GM12878 (cell line): ENCODE measurements at regions of chr16 and their contacts with region 1.

Region 1: DNA sequence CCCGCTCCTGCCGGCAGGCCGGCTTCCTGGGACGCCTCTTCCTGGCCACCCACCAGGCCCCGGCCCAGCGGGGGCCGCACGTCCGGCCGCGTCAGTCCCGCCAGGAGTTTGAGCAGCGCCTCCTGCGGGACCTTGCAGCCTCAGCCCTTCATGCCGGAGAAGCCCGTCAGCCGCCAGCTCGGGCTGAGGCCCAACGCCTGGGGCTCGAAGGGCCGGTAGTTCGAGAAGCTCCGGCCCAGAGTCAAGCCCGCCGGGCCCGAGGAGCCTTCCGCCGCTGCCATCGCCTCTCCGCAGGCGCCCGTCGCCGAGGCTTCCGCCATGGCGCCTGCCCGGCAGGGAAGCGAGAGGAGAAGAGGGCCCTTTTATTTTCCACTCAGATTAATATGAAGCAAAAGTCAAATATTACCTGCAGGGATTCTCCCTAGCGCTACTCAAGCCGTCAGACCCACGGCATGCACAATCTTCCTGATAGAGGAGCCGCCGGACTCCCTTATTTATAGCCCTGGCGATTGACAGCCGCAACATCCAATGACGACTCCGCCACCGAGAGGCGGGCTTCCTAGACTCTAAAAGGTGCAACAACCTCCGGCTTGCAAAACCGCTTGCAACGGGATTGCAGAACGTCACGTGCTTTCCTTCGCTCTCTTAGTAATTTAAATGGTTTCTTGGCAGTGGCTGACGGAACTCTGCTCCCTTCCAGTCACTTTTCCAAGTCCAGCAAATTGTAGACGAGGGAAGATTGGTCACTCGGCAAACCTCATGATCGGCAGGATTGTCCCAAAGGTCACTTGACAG is at the start of gene SEPHS2:
- DNase-seq: peak; percentile 84
- ATAC-seq: peak; percentile 94
- H3K4me3 ChIP-seq: peak within 1 kb of the TSS; percentile 79
- H3K27ac ChIP-seq: peak within 1 kb of the TSS; percentile 85
- H3K4me1 ChIP-seq: peaks cover 10% of the 10 kb centered on the region
- H3K27me3 ChIP-seq: no peaks in the 10 kb centered on the region
- CTCF ChIP-seq: peak; percentile 38 to 52 (median 49); a peak in 5 of 6 replicates
- EP300 ChIP-seq: no peak
- POLR2A ChIP-seq: peak; percentile 90
- RAD21 ChIP-seq: no peak
- polyA plus RNA-seq, gene SEPHS2: 21.6 to 37.4 TPM

Region 2: GRCh38 chr16:30472328-30472942 is 26.8 kb after region 1 on chr16 and contains the start of gene ITGAL:
- CTCF ChIA-PET with region 1: interaction called, 21 read pairs
- POLR2A ChIA-PET with region 1: interaction called, 18 read pairs
- RAD21 ChIA-PET with region 1: interaction called, 18 read pairs
- SMC1A ChIA-PET with region 1: interaction called, 431 read pairs
- in situ Hi-C with region 1: no loop called
- intact Hi-C with region 1: loop called (anchors 2 kb)
- DNase-seq: peak; percentile 98
- ATAC-seq: peak; percentile 67
- H3K4me3 ChIP-seq: peak within 1 kb of the TSS; percentile 96
- H3K27ac ChIP-seq: peak within 1 kb of the TSS; percentile 90
- H3K4me1 ChIP-seq: peaks cover 40% of the 10 kb centered on the region
- H3K27me3 ChIP-seq: no peaks in the 10 kb centered on the region
- CTCF ChIP-seq: no peak
- EP300 ChIP-seq: peak; percentile 86 to 95; a peak in 3 of 4 replicates
- POLR2A ChIP-seq: peak; percentile 81
- RAD21 ChIP-seq: peak; percentile 3; the same call in 1 of the 2 replicates
- polyA plus RNA-seq, gene ITGAL: 10.7 to 12.1 TPM

Region 3: GRCh38 chr16:30478766-30479478 is 33.3 kb after region 1 on chr16:
- CTCF ChIA-PET with region 1: interaction called, 21 read pairs
- POLR2A ChIA-PET with region 1: interaction called, 18 read pairs
- RAD21 ChIA-PET with region 1: interaction called, 18 read pairs
- SMC1A ChIA-PET with region 1: interaction called, 431 read pairs
- in situ Hi-C with region 1: no loop called
- intact Hi-C with region 1: no loop called
- DNase-seq: no peak
- ATAC-seq: peak; percentile 5
- H3K4me3 ChIP-seq: no peak overlapping the region
- H3K27ac ChIP-seq: no peak overlapping the region
- H3K4me1 ChIP-seq: peaks cover 11% of the 10 kb centered on the region
- H3K27me3 ChIP-seq: no peaks in the 10 kb centered on the region
- CTCF ChIP-seq: no peak
- EP300 ChIP-seq: no peak
- POLR2A ChIP-seq: peak; percentile 35; the same call in 1 of the 2 replicates
- RAD21 ChIP-seq: no peak

Region 4: DNA sequence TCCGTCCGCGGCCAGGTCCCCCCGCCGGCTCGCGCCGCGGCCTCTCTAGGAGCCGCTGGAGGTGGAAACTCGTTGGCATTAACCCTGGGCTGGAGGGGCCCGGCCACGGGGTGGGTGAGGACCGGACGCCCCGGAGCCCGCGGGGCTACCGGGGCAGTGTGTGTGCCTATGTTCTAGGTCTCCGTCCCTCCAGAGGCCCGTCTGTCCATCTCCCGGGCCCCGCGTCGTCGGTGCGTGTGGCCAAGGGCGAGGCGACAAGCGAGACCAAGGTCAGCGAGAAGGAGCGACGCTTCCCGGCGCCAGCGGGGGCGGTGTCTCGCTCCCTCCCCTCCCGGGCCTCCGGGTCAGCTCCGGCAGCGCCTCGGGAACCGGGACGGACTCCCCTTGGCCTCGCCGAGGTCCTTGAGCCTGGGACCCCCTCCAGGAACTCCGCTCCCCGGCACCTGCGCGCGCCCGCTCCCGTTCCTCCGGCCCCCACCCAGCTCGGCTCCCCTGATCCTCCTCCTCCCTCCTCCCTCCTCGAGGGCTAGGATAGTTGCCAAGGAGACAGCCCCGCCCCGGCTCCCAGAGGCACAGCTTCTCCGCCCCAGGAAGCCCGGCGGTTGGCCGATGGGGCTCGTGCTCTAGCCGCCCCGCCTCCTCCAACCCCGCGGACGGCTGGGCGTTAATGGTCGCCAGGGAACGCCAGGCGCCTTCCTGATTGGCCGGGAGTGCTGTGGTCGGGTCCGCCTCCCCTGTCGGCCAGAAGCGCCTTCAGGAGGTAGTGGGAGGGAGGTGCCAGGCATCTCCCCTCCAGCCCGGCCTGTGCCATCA is 81.4 kb after region 1 on chr16:
- CTCF ChIA-PET with region 1: interaction called, 11 read pairs
- POLR2A ChIA-PET with region 1: interaction called, 8 read pairs
- RAD21 ChIA-PET with region 1: interaction called, 7 read pairs
- SMC1A ChIA-PET with region 1: interaction called, 7 read pairs
- in situ Hi-C with region 1: no loop called
- intact Hi-C with region 1: no loop called
- DNase-seq: peak; percentile 89
- ATAC-seq: peak; percentile 95
- H3K4me3 ChIP-seq: peak overlapping the region; percentile 91
- H3K27ac ChIP-seq: peak overlapping the region; percentile 93
- H3K4me1 ChIP-seq: peaks cover 15% of the 10 kb centered on the region
- H3K27me3 ChIP-seq: no peaks in the 10 kb centered on the region
- CTCF ChIP-seq: peak; percentile 19 to 42 (median 25); a peak in 4 of 6 replicates
- EP300 ChIP-seq: no peak
- POLR2A ChIP-seq: peak; percentile 42; the same call in 1 of the 2 replicates
- RAD21 ChIP-seq: no peak

Region 5: GRCh38 chr16:30557957-30558788 is 112.6 kb after region 1 on chr16 and contains the start of gene ZNF764:
- CTCF ChIA-PET with region 1: interaction called, 9 read pairs
- POLR2A ChIA-PET with region 1: interaction called, 5 read pairs
- RAD21 ChIA-PET with region 1: interaction called, 13 read pairs
- SMC1A ChIA-PET with region 1: no interaction called
- in situ Hi-C with region 1: no loop called
- intact Hi-C with region 1: no loop called
- DNase-seq: peak; percentile 84
- ATAC-seq: peak; percentile 96
- H3K4me3 ChIP-seq: peak within 1 kb of the TSS; percentile 87
- H3K27ac ChIP-seq: peak within 1 kb of the TSS; percentile 85
- H3K4me1 ChIP-seq: no peaks in the 10 kb centered on the region
- H3K27me3 ChIP-seq: no peaks in the 10 kb centered on the region
- CTCF ChIP-seq: peak; percentile 1 to 9 (median 2); a peak in 1 of 6 replicates
- EP300 ChIP-seq: no peak
- POLR2A ChIP-seq: peak; percentile 68
- RAD21 ChIP-seq: no peak
- polyA plus RNA-seq, gene ZNF764: 0.61 to 1.6 TPM